Ovary (tissue), 10 donors: ENCODE measurements at regions of chr6 and their contacts with region 1.

Region 1: GRCh38 chr6:125974214-125974866 is 12.0 kb upstream of the TRMT11 start:
- DNase-seq: no peak
- H3K4me3 ChIP-seq: no peak overlapping the region
- H3K27ac ChIP-seq: no peak overlapping the region
- H3K4me1 ChIP-seq: no peaks in the 10 kb centered on the region
- H3K27me3 ChIP-seq: no peaks in the 10 kb centered on the region
- CTCF ChIP-seq: peak; percentile 9 to 40 (median 25)
- EP300 ChIP-seq: no peak
- POLR2A ChIP-seq: no peak

Region 2: GRCh38 chr6:125301435-125302391 is 672.6 kb before region 1 on chr6 and contains the start of gene HDDC2:
- intact Hi-C with region 1: loop called in 1 of 4 experiments (anchors 10 kb)
- DNase-seq: peak; percentile 63 to 81 (median 72)
- H3K4me3 ChIP-seq: peak within 1 kb of the TSS; percentile 75
- H3K27ac ChIP-seq: peak within 1 kb of the TSS; percentile 31 to 70
- H3K4me1 ChIP-seq: peaks cover 11% of the 10 kb centered on the region
- H3K27me3 ChIP-seq: no peaks in the 10 kb centered on the region
- CTCF ChIP-seq: no peak
- EP300 ChIP-seq: no peak
- POLR2A ChIP-seq: peak; percentile 22
- total RNA-seq, gene HDDC2: 31.4 to 75.5 (median 54.4) TPM

Region 3: GRCh38 chr6:125314019-125314581 is 660.2 kb before region 1 on chr6:
- intact Hi-C with region 1: loop called in 2 of 4 experiments (anchors 5 to 10 kb)
- DNase-seq: peak; percentile 20 to 67 (median 63)
- H3K4me3 ChIP-seq: no peak overlapping the region
- H3K27ac ChIP-seq: no peak overlapping the region
- H3K4me1 ChIP-seq: no peaks in the 10 kb centered on the region
- H3K27me3 ChIP-seq: no peaks in the 10 kb centered on the region
- CTCF ChIP-seq: peak; percentile 30 to 54 (median 48)
- EP300 ChIP-seq: no peak
- POLR2A ChIP-seq: no peak